ENCODE measurements at regions of chr12 and their contacts with region 1.

Region 1: GRCh38 chr12:48527891-48528675 is 2.7 kb downstream of the OR8S1 start:
- DNase-seq: no peak
- ATAC-seq: no peak
- H3K4me3 ChIP-seq: no peak overlapping the region
- H3K27ac ChIP-seq: no peak overlapping the region
- H3K4me1 ChIP-seq: no peaks in the 10 kb centered on the region
- H3K27me3 ChIP-seq: no peaks in the 10 kb centered on the region
- CTCF ChIP-seq: no peak
- EP300 ChIP-seq: no peak
- POLR2A ChIP-seq: no peak
- RAD21 ChIP-seq: no peak

Region 2: DNA sequence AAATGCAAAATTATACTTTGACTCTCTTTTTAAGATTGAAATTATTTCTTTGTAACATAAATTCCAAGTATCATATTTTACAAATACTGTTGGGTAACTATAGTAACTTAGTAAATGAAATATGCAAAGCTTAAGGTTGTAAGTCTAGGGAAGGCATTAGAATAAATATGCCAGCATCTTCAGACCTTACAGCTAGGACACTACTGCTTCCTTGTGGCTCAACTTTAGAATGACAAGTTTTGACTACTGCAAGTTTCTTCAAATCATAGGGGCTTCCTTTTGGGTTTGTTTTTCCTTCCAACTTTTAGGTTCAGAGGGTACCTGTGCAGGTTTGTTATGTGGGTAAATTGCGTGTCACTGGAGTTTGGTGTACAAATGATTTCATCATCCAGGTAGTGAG is 73.4 kb before region 1 on chr12:
- CTCF ChIA-PET with region 1: no interaction called
- POLR2A ChIA-PET with region 1: no interaction called
- RAD21 ChIA-PET with region 1: no interaction called
- SMC1A ChIA-PET with region 1: no interaction called
- in situ Hi-C with region 1: no loop called
- intact Hi-C with region 1: loop called (anchors 5 kb)
- DNase-seq: no peak
- ATAC-seq: no peak
- H3K4me3 ChIP-seq: no peak overlapping the region
- H3K27ac ChIP-seq: no peak overlapping the region
- H3K4me1 ChIP-seq: no peaks in the 10 kb centered on the region
- H3K27me3 ChIP-seq: no peaks in the 10 kb centered on the region
- CTCF ChIP-seq: peak in 2 of 3 experiments; percentile 13 to 25; a peak in 2 of 6 replicates
- EP300 ChIP-seq: no peak
- POLR2A ChIP-seq: no peak
- RAD21 ChIP-seq: peak; percentile 66